Psoas muscle (tissue), 8 donors: ENCODE measurements at regions of chr16 and their contacts with region 1.

Region 1: DNA sequence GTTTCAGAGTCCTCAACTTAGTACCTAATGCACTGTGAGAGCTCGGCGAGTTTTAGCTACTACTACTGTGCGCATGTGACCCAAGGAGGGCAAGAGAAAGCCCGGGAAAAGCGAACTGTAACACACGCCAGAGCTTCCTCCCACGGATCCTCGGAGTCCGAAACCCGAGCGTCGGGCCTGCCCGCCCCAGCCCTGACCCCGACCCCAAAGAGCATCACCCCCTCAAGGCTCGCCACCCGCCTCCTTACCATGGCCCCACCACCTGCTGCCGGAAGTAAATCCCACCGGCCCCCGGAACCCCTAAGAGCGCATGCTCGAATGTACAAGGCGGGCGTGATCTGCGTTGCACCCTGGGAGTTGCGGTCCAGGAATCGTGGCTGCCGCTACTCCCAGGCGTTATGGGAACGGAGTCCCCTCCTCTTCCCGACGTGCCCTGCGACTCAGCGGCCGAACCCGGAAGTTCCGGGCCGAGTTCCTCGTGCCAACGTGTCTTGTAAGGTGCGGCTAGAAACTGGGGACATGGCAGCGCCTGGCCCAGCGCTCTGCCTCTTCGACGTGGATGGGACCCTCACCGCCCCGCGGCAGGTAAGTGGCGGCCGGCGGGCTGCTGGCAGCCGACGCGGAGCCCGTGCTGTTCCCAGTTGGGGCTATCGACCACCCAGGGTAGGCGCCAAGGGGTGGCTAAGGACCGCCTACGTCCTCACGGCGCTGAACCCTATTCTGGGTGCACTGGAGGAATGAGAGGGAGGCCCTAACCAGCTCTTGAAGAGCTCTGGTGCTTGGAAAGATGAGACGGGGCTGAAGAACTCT is at the starts of genes PMM2 and TMEM186:
- DNase-seq: peak; percentile 96 to 98
- ATAC-seq: peak; percentile 98 to 100 (median 99)
- H3K4me3 ChIP-seq: peak within 1 kb of the TSS; percentile 100
- H3K27ac ChIP-seq: peak within 1 kb of the TSS; percentile 93
- H3K4me1 ChIP-seq: peaks cover 22% of the 10 kb centered on the region
- H3K27me3 ChIP-seq: no peaks in the 10 kb centered on the region
- CTCF ChIP-seq: no peak
- total RNA-seq, gene PMM2: 8.5 to 32.3 (median 21.0) TPM
- total RNA-seq, gene TMEM186: 10.6 to 17.3 (median 12.4) TPM

Region 2: DNA sequence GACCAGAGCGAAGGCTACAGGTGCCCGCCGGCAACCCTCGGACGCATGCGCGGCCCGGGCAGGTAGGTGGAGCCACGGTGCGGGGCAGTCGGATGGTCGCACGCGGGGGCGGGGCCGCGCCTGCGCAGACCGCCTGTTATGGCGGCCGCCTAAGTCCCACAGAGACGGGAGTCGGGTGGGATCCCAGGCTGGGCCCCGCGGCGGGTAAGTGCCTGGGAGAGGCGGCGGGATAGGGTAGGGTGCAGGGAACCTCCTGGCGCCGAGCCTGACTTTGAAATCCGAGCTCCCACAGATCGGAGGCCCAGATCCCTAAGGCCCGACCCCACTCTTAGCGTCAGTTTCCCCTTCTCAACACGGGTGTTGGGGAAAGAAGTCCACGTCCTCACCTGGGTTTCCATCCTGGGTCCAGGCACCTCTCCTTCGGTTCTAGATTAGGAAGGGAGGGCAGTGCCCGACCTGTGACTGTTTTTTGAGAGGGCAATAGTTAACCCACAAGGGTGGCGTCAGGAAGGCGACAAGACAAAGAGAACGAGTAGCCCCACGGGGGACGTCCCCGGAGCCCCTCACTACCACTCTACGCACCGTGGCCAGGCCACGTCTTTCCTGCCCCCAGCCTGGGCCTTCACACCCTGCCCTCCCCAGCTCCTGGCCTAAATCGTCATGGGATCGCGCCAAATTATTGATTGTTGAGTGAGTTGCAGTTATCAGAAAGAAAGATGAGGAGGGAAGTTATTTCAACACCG is 175.8 kb before region 1 on chr16 and contains the start of gene METTL22:
- intact Hi-C with region 1: loop called in 1 of 2 experiments (anchors 1 kb)
- DNase-seq: peak; percentile 92 to 96
- ATAC-seq: peak; percentile 96 to 98 (median 97)
- H3K4me3 ChIP-seq: peak within 1 kb of the TSS; percentile 85
- H3K27ac ChIP-seq: peak within 1 kb of the TSS; percentile 94
- H3K4me1 ChIP-seq: peaks cover 18% of the 10 kb centered on the region
- H3K27me3 ChIP-seq: no peaks in the 10 kb centered on the region
- CTCF ChIP-seq: no peak
- total RNA-seq, gene METTL22: 66.4 to 85.9 (median 74.8) TPM

Region 3: DNA sequence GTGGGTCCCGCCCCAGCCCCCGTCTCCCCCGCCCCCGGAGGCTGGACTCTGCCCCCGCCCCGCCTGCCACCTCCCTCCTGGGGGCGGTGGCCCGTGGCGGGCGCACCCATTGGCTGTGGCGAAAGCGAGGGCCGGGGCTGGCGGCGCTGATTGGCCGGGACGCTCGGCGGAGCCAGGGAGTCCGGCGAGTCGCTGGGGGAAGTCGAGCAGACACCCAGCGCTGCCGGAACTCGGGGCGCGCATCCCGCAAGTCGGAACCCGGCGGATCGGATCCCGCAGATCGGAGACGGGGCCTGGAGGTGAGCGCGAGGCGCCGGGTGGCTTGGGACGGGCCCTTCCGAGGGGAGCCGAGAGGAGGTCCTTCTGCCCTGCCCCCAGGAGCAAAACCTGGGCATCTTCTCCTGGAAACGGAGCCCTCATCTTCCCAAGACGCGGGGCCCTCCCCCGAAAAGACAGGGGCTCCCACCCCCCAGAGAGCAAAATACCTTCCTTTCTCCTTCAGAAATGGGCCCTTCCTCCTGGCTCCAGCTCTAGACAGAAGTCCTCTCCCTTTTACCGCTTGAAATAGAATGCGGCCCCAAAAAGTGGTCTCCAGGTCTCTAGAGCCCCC is 123.1 kb before region 1 on chr16 and contains the start of gene ABAT:
- intact Hi-C with region 1: loop called (anchors 5 to 10 kb)
- DNase-seq: peak; percentile 90 to 94
- ATAC-seq: peak; percentile 99 to 100 (median 100)
- H3K4me3 ChIP-seq: peak within 1 kb of the TSS; percentile 76
- H3K27ac ChIP-seq: no peak within 1 kb of the TSS
- H3K4me1 ChIP-seq: peaks cover 5% of the 10 kb centered on the region
- H3K27me3 ChIP-seq: no peaks in the 10 kb centered on the region
- CTCF ChIP-seq: no peak
- total RNA-seq, gene ABAT: 0.64 to 1.7 (median 0.97) TPM

Region 4: DNA sequence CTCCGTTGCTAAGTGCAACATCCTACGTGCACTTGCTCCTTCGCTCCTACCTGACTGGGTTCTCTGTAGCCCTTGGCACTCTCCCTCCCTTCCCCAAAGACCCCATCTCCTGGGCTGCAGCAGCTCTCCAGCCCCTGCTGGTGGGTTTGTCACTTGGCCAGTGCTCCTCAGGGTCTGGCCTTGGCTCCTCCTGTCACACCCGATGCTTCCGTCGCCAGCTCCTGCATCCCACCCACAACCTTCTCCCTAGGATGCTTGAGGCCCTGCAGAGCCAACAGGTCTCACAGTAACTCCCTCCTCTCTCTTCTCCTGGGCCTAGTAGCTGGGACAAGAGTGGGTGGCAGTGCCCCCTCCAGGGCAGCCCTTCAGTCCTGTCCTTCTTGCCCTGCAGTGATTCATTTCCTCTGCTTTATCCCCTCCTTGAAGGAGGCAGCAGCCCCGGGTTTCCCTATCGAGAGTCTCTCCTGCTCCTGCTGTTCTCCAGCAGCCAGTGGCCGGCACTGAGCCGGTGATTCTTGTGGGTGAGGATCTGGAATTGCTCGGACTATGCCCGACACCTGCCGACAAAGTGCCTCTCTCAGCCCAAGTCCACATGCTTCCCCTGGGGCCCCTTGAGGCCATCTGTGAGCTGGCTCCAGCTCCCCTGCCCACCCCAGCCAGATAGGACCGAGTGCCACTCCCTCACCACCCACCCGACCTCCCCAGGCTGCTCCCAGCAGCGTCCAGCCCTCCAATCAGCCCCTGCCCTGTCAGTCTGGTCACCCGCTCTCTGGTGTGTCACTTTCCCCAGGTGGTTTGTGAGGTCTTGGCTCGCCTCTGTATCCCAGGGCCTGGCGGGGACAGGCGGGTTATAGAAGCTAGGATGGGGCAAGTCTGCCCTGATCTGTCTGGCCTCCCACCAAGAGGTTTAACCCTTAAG is 88.4 kb after region 1 on chr16:
- intact Hi-C with region 1: loop called (anchors 5 to 10 kb)
- DNase-seq: peak; percentile 51 to 70
- ATAC-seq: peak; percentile 25 to 54 (median 42)
- H3K4me3 ChIP-seq: no peak overlapping the region
- H3K27ac ChIP-seq: peak overlapping the region; percentile 48
- H3K4me1 ChIP-seq: peaks cover 46% of the 10 kb centered on the region
- H3K27me3 ChIP-seq: peaks cover 0 to 16% (median 0%) of the 10 kb centered on the region in 3 donors
- CTCF ChIP-seq: no peak

Region 5: DNA sequence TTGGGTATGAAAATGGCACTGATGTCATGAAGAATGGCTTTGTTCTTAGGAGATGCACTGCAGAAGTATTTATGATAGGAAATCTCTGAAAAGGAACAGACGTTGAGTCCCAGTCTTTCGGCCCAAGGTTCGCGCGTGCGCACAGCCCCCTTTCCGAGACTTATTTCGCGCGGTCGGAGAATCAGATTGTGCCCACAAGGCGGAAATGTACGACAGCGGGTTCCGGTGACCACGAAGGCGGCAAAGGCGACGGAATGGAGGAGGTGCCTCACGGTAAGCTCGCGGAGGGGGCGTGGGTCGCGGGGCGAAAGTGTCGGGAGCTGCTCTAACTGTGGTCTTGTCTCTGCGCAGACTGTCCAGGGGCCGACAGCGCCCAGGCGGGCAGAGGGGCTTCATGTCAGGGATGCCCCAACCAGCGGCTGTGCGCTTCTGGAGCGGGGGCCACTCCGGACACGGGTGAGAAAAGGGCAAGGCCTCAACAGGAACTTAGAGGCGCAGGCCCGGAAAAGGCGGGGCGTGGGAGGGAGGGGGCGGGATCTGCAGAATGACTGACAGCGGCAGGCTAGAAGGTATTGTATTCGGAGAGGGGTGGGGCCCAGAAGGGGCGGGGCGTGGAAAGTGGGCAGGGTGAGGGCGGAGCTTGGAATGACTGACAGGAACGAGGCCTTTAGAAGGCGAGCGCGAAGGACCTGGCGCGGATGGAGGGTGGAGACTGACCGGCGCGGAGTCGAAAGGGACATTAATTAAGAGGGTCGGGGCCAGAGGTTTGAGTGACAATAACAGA is 1946.2 kb after region 1 on chr16 and contains the start of gene NUBP1:
- intact Hi-C with region 1: loop called in 1 of 2 experiments (anchors 5 kb)
- DNase-seq: peak; percentile 99
- ATAC-seq: peak; percentile 97 to 98 (median 98)
- H3K4me3 ChIP-seq: peak within 1 kb of the TSS; percentile 58
- H3K27ac ChIP-seq: peak within 1 kb of the TSS; percentile 86
- H3K4me1 ChIP-seq: peaks cover 23% of the 10 kb centered on the region
- H3K27me3 ChIP-seq: no peaks in the 10 kb centered on the region
- CTCF ChIP-seq: no peak
- total RNA-seq, gene NUBP1: 24.7 to 38.1 (median 29.0) TPM